Activated CD4-positive, alpha-beta memory T cell treated with anti-CD3 and anti-CD28 coated beads, Interleukin-2, amount 10 ng/mL, durations not matched to agents 7 days and 5 days (primary cell): ENCODE measurements at regions of chr7 and their contacts with region 1.

Region 1: GRCh38 chr7:150962553-150963399 is 15.3 kb downstream of the KCNH2 start:
- DNase-seq: peak; percentile 64
- H3K4me3 Mint-ChIP-seq: no peak overlapping the region
- H3K27ac Mint-ChIP-seq: no peak overlapping the region
- H3K4me1 Mint-ChIP-seq: peaks cover 9% of the 10 kb centered on the region
- H3K27me3 Mint-ChIP-seq: peaks cover 30% of the 10 kb centered on the region

Region 2: GRCh38 chr7:150898475-150899011 is 64.2 kb before region 1 on chr7:
- CTCF ChIA-PET with region 1: interaction called, 13 read pairs
- POLR2A ChIA-PET with region 1: no interaction called
- DNase-seq: peak; percentile 81
- H3K4me3 Mint-ChIP-seq: no peak overlapping the region
- H3K27ac Mint-ChIP-seq: no peak overlapping the region
- H3K4me1 Mint-ChIP-seq: peaks cover 13% of the 10 kb centered on the region
- H3K27me3 Mint-ChIP-seq: peaks cover 58% of the 10 kb centered on the region

Region 3: DNA sequence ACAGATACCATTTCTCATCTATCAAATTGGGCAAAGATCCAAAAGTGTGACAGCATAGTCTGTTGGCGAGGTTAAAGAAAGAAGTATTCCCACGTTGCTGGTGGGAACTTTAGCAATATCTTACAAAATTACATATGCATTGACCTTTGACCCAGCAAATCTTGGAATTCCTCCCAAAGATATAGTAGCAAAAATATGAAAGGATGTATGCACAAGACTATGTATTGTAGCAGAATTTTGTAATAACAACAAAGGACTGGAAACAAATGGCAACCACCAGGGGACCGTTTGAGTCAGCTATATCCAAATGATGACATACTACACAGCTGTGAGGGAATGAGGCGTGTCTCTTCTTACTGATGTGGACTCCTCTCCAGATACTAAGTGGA is 34.8 kb before region 1 on chr7:
- CTCF ChIA-PET with region 1: no interaction called
- POLR2A ChIA-PET with region 1: no interaction called
- DNase-seq: peak; percentile 15
- H3K4me3 Mint-ChIP-seq: no peak overlapping the region
- H3K27ac Mint-ChIP-seq: no peak overlapping the region
- H3K4me1 Mint-ChIP-seq: peaks cover 4% of the 10 kb centered on the region
- H3K27me3 Mint-ChIP-seq: peaks cover 29% of the 10 kb centered on the region

Region 4: DNA sequence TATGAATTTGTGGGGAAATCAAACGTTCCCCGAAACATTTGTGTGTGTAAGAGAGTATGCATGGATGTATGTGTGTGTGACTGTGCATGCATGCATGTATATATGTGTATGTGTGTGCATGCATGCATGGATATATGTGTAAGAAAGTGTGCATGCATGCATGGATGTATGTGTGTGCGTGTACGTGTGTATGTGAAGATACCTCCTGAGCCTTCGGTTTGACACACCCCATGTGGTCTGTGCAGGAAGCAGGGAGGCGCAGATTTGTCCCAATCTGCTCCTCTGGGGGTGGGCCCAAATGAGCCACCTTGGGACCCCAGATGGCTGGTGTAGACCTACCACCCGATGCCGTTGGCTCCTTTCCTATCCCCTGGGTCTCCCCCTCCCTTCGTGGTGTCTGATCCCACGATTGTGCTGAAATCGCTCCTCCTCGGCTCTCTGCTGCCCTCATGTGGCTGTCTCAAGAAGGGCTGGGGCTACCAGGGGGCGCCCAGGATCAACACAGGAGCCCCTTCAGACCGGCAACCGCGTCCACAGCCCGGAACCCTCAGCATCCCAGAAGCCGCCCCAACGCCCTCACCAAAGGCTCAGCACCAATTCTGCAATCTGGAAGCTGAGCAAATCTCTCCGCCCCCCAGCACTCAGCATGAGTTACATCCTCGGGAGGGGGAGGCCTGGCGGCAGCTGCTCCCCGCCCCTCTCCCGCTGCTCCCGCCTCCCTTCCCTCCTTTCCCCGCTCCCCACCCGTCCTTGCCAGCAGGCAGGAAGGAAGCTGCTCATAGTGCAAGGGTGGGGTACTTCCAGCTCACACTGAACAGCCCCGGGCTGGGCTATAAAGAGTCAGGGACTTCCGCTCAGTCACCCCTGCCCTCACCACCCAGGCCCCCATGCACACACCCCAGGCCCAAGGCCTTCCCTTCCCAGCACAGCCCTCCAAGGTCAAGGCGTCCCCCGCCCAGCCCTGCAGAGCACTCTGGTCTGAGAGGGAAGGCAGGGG is 25.8 kb after region 1 on chr7:
- CTCF ChIA-PET with region 1: interaction called, 31 read pairs
- POLR2A ChIA-PET with region 1: interaction called, 3 read pairs
- DNase-seq: peak; percentile 74
- H3K4me3 Mint-ChIP-seq: peak overlapping the region; percentile 15
- H3K27ac Mint-ChIP-seq: peak overlapping the region; percentile 10
- H3K4me1 Mint-ChIP-seq: peaks cover 36% of the 10 kb centered on the region
- H3K27me3 Mint-ChIP-seq: peaks cover 27% of the 10 kb centered on the region

Region 5: GRCh38 chr7:151008511-151009323 is 45.9 kb after region 1 on chr7:
- CTCF ChIA-PET with region 1: interaction called, 24 read pairs
- POLR2A ChIA-PET with region 1: interaction called, 3 read pairs
- DNase-seq: peak; percentile 79
- H3K4me3 Mint-ChIP-seq: peak overlapping the region; percentile 76
- H3K27ac Mint-ChIP-seq: peak overlapping the region; percentile 92
- H3K4me1 Mint-ChIP-seq: peaks cover 67% of the 10 kb centered on the region
- H3K27me3 Mint-ChIP-seq: peaks cover 2% of the 10 kb centered on the region

Region 6: DNA sequence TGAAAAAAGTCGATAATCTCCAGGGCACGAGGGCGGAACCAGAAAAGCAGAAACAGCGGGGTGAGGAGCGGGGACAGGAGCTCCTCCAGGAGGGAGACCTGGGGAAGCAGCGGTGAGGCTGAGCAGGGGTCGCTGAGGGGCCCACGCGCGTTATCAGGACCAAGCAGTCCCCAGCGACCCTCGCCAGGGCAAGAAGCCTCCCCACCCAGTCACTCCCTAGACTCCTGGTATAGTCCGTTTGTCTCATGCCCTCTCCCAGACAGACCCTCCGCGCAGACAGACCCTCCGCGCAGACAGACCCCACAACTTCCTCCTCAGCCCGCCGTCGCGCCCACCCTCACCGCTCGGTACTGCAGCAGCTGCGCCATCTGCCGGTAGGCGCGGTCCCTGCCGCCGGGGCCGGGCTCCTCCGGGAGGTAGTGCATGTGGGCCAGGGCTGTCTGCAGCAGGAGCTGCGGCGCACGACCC is 55.2 kb after region 1 on chr7:
- CTCF ChIA-PET with region 1: interaction called, 45 read pairs
- POLR2A ChIA-PET with region 1: interaction called, 4 read pairs
- DNase-seq: peak; percentile 82
- H3K4me3 Mint-ChIP-seq: peak overlapping the region; percentile 66
- H3K27ac Mint-ChIP-seq: no peak overlapping the region
- H3K4me1 Mint-ChIP-seq: peaks cover 61% of the 10 kb centered on the region
- H3K27me3 Mint-ChIP-seq: peaks cover 32% of the 10 kb centered on the region

Region 7: DNA sequence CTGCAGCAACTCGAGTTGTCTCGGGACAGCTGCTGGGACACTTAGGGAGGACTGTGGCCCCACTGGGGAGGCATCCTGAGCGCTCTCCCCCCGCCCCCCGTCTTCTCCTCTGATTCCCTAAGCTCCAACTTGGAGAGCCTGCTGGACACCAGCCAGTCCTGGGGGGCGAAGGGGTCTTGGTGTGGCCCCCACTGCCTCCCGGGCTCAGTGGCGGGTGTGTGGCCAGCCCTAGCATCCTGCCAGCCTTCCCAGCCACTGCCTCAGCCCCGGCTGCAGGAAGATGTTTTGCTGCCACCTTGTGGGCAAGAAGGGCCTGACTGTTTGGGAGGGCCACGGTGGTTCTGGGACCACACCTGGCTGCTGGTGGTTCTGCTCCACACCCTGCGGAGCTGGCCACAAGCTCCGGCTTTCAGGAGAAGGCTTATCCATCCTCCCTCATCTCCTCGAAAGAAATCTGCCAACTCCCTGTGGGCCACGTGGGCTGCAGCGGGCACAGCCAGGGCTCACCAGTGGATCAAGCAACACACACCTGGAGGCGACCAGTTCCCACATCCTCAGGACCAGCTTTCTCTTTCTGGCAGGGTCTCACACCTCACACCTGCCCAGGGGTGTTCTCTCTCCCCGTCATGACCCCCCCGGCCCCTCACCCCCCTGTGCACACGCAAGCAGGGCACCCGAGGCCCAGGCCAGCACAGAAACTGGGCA is 148.3 kb after region 1 on chr7:
- CTCF ChIA-PET with region 1: interaction called, 25 read pairs
- POLR2A ChIA-PET with region 1: no interaction called
- DNase-seq: peak; percentile 78
- H3K4me3 Mint-ChIP-seq: no peak overlapping the region
- H3K27ac Mint-ChIP-seq: no peak overlapping the region
- H3K4me1 Mint-ChIP-seq: peaks cover 8% of the 10 kb centered on the region
- H3K27me3 Mint-ChIP-seq: peaks cover 11% of the 10 kb centered on the region